PC-9 (cell line): ENCODE measurements at regions of chr10 and their contacts with region 1.

Region 1: DNA sequence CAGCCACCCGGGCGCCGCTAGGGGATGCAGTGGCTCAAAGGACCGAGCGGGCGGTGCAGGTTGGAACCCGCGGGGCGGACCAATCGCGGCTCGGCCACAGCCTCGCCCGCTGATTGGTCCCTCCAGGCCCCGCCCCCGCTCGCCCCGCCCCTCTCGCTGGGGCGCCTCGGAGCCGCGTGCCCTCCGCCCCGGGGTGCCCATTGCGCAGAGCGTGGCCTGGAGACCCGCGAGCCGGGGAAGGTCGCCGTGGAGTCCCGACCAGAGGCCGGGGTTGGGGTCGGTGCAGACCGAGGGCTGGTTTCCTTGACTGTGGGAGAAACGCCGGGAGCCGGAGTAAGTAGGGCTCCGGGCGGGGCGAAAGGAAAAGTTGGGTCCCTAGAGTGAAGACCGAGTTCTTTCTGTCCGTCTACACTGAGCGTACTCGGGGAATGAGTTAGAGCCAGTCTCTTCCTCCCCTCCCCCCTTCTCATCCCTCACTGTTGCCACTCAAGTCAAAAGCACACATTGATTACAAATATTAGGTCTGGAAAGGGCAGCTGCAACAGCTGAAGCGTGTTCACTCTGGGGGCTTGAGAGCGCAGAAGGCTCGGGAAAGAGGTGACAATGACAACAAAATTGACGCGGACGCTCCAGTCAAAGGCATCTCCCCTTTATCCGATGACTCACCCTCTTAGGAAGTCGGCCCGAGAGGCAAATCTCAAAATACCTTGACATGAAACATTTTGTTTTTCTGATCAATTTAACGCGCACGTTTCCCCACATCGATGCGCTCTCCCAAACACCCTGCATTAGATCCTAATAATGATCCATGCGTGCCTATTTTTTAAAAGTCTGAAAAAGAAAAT is 820 bp upstream of the GATA3 start:
- DNase-seq: peak; percentile 52 to 87
- H3K4me3 ChIP-seq: peak overlapping the region; percentile 59
- H3K27ac ChIP-seq: peak overlapping the region; percentile 87
- H3K4me1 ChIP-seq: no peaks in the 10 kb centered on the region
- H3K27me3 ChIP-seq: no peaks in the 10 kb centered on the region
- CTCF ChIP-seq: no peak; the same call in 1 of the 2 replicates

Region 2: DNA sequence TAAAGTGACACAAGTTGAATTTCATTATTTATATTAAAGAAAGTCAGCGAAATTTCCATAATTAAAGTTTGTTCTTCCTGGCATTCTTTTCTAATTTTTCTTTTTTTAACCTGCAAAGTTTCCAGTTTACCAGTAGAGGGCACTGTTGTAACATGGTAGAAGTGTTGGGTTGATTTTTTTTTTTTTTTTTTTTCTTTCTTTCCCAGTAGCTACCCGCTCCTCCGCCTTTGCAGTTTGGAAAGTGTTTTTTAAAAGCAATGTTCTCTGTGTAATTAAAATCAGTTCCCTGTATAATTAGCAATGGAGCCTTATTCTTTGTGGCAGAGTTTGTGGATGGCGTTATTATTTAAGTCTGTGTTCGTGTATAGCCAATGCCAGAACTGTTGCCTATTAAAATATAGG is 181.6 kb before region 1 on chr10:
- CTCF ChIA-PET with region 1: no interaction called
- POLR2A ChIA-PET with region 1: interaction called, 3 read pairs
- intact Hi-C with region 1: loop called (anchors 2 kb)
- DNase-seq: peak in 1 of 2 experiments; percentile 5
- H3K4me3 ChIP-seq: peak overlapping the region; percentile 54; the same call in 1 of the 2 replicates
- H3K27ac ChIP-seq: no peak overlapping the region
- H3K4me1 ChIP-seq: peaks cover 8% of the 10 kb centered on the region
- H3K27me3 ChIP-seq: no peaks in the 10 kb centered on the region
- CTCF ChIP-seq: peak; percentile 74

Region 3: GRCh38 chr10:8374334-8374733 is 320.7 kb after region 1 on chr10:
- CTCF ChIA-PET with region 1: no interaction called
- POLR2A ChIA-PET with region 1: interaction called, 11 read pairs
- intact Hi-C with region 1: no loop called
- DNase-seq: no peak
- H3K4me3 ChIP-seq: no peak overlapping the region
- H3K27ac ChIP-seq: no peak overlapping the region
- H3K4me1 ChIP-seq: peaks cover 5% of the 10 kb centered on the region; the same call in 1 of the 2 replicates
- H3K27me3 ChIP-seq: no peaks in the 10 kb centered on the region
- CTCF ChIP-seq: no peak

Region 4: DNA sequence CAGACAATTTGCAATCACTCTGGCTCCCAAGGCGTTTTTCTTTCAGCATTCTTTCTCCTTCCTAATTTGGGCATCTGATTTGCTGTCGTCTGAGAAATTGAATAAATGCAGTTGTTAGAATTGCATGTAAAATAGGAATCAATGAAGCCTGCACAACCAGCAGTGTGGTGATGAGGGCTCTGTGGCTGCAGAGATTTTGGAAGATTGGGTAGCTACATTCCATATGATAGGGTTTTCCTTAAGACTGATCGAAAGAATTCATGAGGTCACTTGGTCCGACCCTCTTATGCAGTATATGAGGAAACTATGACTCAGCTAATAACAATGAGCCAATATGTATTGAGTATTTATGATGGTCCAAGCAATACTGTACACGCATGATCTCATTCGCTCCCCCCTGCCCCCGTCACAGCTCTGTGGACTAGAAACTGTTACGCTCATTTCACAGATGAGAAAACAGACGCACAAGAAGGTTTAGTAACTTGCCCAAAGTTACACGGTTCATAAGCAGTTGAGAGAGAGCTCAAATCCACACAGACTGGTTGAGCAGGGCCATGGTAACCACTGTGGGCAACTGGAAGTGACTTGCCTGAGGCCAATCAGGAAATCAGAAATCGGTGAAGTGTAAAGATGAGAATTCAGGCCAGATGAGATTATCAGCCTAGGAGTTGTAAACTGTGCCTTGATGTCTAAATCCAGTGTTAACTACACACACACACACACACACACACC is 528.0 kb after region 1 on chr10:
- CTCF ChIA-PET with region 1: no interaction called
- POLR2A ChIA-PET with region 1: no interaction called
- intact Hi-C with region 1: loop called (anchors 5 kb)
- DNase-seq: peak; percentile 67 to 91
- H3K4me3 ChIP-seq: peak overlapping the region; percentile 26; the same call in 1 of the 2 replicates
- H3K27ac ChIP-seq: peak overlapping the region; percentile 92
- H3K4me1 ChIP-seq: peaks cover 34% of the 10 kb centered on the region
- H3K27me3 ChIP-seq: no peaks in the 10 kb centered on the region
- CTCF ChIP-seq: no peak

Region 5: DNA sequence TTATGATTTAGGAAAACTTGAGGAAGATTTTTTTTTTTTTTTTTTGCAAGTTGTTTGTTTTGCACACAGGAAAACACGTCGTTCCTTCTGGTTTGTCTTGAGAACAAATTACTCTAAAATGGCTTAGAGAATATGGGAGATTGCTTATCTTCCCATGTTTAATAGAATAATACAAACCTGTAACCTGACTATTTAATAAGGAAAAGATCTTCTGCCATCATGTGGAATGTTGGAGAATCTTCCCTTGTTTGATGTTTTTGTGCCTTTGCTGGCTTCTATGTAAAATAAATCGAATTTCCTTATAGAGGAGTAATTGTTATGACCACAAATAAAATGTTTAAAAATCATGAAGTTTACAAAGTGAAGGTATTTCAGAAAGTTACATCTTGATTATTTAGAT is 819.6 kb after region 1 on chr10:
- CTCF ChIA-PET with region 1: no interaction called
- POLR2A ChIA-PET with region 1: no interaction called
- intact Hi-C with region 1: loop called (anchors 1 kb)
- DNase-seq: peak in 1 of 2 experiments; percentile 51
- H3K4me3 ChIP-seq: no peak overlapping the region
- H3K27ac ChIP-seq: peak overlapping the region; percentile 48
- H3K4me1 ChIP-seq: peaks cover 20% of the 10 kb centered on the region
- H3K27me3 ChIP-seq: no peaks in the 10 kb centered on the region
- CTCF ChIP-seq: peak; percentile 53; the same call in 1 of the 2 replicates